ENCODE measurements at regions of chr10 and their contacts with region 1.

Region 1: DNA sequence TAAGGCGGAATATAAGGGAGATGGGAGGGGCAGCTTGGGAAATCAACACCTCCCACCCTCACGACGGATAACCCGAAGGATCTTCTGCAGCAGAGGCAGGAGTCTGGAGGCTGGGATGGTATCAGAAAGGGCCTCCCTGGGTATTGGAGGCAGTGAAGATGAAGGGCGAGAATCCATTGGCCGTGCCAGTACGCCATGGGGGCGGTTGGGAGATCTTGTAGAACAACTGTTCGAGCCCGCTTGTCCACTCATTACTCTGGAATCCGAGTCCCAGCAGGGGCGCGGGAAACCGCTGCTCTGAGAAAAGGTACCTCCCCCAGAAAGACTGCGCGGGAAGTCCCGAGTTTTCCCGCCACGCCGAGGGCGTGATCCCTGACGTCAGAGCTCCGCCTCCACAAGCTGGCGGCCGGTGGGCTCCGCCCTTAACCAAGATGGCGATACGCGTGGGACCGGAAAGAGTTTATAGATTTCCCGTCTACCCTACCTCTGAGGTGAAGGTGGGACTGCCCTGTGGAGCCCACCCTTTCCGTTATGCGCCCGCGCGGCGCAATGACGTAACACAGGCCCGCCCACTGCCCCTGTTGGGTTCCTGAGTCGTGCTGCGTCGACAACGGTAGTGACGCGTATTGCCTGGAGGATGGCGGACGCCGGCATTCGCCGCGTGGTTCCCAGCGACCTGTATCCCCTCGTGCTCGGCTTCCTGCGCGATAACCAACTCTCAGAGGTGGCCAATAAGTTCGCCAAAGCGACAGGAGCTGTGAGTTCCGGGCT is at the start of gene NOLC1:
- DNase-seq: peak; percentile 100
- ATAC-seq: peak; percentile 92
- H3K4me3 Mint-ChIP-seq: peak within 1 kb of the TSS; percentile 99
- H3K27ac Mint-ChIP-seq: peak within 1 kb of the TSS; percentile 99
- H3K4me1 Mint-ChIP-seq: peaks cover 49% of the 10 kb centered on the region
- H3K27me3 Mint-ChIP-seq: no peaks in the 10 kb centered on the region
- total RNA-seq, gene NOLC1: 206 to 283 TPM

Region 2: GRCh38 chr10:101319241-101319915 is 832.6 kb before region 1 on chr10:
- CTCF ChIA-PET with region 1: no interaction called
- POLR2A ChIA-PET with region 1: no interaction called
- intact Hi-C with region 1: no loop called
- DNase-seq: no peak
- ATAC-seq: no peak
- H3K4me3 Mint-ChIP-seq: no peak overlapping the region
- H3K27ac Mint-ChIP-seq: no peak overlapping the region
- H3K4me1 Mint-ChIP-seq: no peaks in the 10 kb centered on the region
- H3K27me3 Mint-ChIP-seq: peaks cover 9% of the 10 kb centered on the region

Region 3: DNA sequence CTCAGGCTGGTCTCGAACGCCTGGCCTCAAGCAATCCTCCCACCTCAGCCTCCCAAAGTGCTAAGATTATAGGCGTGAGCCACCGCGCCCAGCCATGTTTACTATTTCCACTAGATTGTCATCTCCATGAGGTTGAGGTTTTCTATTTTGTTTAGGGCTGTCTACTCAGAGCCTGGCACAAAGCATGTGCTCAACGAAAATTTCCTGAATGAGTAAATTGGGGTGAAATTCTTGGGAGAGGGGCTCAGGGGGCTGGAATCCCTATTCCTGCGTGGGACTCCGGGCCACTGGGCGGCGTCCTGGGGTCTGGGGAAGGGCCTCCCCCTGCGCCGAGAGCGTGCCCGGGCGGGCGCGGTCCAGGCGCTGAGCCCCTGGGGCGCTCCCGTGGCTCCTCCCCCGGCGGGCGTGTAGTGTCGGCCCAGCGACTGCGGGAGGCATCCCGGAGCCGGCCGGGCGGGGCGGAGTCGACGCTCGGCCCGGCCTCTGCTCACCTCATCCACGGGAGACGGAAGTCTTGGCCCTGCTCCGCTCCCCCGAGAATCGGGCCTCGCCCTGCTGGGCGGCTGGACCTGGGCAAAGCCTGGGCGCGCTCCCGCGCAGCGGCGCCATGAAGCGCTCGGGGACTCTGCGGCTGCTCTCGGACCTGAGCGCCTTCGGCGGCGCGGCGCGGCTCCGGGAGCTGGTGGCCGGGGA is 86.9 kb before region 1 on chr10 and contains the start of gene HPS6:
- CTCF ChIA-PET with region 1: no interaction called
- POLR2A ChIA-PET with region 1: no interaction called
- intact Hi-C with region 1: loop called in 1 of 2 experiments (anchors 1 kb)
- DNase-seq: peak; percentile 94
- ATAC-seq: peak; percentile 99
- H3K4me3 Mint-ChIP-seq: peak within 1 kb of the TSS; percentile 79
- H3K27ac Mint-ChIP-seq: peak within 1 kb of the TSS; percentile 88
- H3K4me1 Mint-ChIP-seq: peaks cover 22% of the 10 kb centered on the region
- H3K27me3 Mint-ChIP-seq: no peaks in the 10 kb centered on the region
- total RNA-seq, gene HPS6: 12.9 to 18.9 TPM

Region 4: DNA sequence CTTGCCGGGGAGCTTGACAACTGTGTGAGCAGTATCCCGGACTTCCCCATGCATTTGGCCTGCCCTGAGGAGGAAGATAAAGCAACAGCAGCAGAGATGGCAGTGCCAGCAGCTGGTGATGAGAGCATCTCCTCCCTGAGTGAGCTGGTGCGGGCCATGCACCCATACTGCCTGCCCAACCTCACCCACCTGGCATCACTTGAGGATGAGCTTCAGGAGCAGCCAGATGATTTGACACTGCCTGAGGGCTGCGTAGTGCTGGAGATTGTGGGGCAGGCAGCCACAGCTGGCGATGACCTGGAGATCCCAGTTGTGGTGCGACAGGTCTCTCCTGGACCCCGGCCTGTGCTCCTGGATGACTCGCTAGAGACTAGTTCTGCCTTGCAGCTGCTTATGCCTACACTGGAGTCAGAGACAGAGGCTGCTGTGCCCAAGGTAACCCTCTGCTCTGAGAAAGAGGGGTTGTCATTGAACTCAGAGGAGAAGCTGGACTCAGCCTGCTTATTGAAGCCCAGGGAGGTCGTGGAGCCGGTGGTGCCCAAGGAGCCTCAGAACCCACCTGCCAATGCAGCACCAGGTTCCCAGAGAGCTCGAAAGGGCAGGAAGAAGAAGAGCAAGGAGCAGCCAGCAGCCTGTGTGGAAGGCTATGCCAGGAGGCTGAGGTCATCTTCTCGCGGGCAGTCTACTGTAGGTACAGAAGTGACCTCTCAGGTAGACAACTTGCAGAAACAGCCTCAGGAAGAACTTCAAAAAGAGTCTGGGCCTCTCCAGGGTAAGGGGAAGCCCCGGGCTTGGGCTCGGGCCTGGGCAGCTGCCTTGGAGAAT is 12.5 kb before region 1 on chr10:
- CTCF ChIA-PET with region 1: interaction called, 13 read pairs
- POLR2A ChIA-PET with region 1: interaction called, 11 read pairs
- intact Hi-C with region 1: no loop called
- DNase-seq: no peak
- ATAC-seq: no peak
- H3K4me3 Mint-ChIP-seq: no peak overlapping the region
- H3K27ac Mint-ChIP-seq: no peak overlapping the region
- H3K4me1 Mint-ChIP-seq: peaks cover 27% of the 10 kb centered on the region
- H3K27me3 Mint-ChIP-seq: no peaks in the 10 kb centered on the region

Region 5: DNA sequence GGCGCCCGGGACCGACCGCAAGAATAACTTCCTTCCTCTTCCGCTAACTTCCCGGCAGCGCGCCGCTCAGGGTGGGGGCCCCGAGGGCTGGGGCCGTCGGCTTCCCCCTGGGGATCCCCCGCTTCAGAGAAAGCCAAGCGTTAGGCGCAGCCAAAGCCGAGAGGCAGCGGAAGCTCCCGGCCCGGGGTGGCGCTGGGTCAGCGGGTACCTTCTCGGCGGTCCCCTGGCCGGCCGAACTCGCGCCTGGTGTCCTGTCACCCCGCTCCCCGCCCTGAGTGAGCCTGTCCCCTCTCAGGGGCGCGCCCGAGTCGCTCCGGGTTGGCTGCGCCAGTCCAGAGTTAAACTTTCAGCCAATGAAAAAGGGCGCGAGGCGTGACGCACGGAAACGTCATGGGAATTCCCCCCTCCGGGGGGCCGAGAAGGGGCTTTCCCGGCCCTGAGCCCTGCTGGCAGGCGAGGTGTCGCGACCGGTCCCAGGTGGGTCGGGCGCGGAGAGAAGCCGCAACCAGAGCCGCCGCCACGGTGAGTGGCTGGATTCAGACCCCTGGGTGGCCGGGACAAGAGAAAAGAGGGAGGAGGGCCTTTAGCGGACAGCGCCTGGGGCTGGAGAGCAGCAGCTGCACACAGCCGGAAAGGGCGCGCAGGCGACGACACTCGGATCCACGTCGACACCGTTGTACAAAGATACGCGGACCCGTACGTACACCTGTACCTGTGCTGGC is 242.3 kb after region 1 on chr10:
- CTCF ChIA-PET with region 1: interaction called, 5 read pairs
- POLR2A ChIA-PET with region 1: interaction called, 10 read pairs
- intact Hi-C with region 1: loop called (anchors 1 kb)
- DNase-seq: peak; percentile 99
- ATAC-seq: peak; percentile 87
- H3K4me3 Mint-ChIP-seq: peak overlapping the region; percentile 95
- H3K27ac Mint-ChIP-seq: peak overlapping the region; percentile 99
- H3K4me1 Mint-ChIP-seq: peaks cover 41% of the 10 kb centered on the region
- H3K27me3 Mint-ChIP-seq: no peaks in the 10 kb centered on the region

Region 6: DNA sequence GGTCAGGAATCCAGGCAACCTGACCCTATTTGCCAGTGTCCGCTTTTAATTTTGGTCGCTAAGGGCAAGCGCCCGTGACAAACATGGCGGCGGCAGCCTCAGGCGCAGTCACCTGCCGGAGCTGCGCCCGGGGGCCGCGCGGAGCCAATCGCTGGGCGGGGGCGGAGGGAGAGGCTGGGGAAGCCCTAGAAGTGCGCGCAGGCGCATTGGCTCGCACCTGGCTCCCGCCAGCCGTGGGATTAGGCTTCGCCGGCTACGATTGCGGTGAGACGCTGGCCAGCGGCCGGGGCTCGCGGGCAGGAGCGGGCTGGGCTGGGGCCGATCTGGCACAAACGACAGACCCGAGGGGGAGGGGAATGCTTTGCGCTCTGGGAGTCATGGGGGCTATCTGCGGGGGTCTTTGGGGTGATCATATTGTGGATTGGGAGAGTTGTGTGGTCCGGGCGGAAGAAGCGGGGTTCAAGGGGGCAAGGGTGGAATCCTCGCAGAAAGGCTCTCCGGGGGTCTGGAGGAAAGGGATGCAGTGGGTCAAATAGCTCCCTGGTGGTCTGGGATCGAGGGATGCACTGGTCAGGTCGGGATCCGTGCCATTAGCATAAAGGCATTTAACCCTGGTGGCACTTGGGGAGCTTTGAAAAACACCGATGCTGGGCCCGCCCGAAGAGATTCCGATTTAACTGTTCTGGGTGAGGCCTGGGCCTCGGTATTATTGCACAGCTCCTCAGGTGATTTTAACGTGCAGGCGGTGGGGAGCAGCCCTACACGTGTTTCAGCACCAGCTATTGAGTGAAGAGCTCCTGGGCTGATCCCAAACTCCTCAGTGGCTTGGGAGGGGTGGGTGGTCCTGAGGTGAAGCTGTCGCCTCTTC is 309.5 kb after region 1 on chr10:
- CTCF ChIA-PET with region 1: interaction called, 4 read pairs
- POLR2A ChIA-PET with region 1: no interaction called
- intact Hi-C with region 1: loop called in 1 of 2 experiments (anchors 1 kb)
- DNase-seq: peak; percentile 97
- ATAC-seq: peak; percentile 98
- H3K4me3 Mint-ChIP-seq: peak overlapping the region; percentile 85
- H3K27ac Mint-ChIP-seq: peak overlapping the region; percentile 73
- H3K4me1 Mint-ChIP-seq: peaks cover 27% of the 10 kb centered on the region
- H3K27me3 Mint-ChIP-seq: no peaks in the 10 kb centered on the region